HEK293T (cell line): ENCODE measurements at regions of chr10 and their contacts with region 1.

Region 1: DNA sequence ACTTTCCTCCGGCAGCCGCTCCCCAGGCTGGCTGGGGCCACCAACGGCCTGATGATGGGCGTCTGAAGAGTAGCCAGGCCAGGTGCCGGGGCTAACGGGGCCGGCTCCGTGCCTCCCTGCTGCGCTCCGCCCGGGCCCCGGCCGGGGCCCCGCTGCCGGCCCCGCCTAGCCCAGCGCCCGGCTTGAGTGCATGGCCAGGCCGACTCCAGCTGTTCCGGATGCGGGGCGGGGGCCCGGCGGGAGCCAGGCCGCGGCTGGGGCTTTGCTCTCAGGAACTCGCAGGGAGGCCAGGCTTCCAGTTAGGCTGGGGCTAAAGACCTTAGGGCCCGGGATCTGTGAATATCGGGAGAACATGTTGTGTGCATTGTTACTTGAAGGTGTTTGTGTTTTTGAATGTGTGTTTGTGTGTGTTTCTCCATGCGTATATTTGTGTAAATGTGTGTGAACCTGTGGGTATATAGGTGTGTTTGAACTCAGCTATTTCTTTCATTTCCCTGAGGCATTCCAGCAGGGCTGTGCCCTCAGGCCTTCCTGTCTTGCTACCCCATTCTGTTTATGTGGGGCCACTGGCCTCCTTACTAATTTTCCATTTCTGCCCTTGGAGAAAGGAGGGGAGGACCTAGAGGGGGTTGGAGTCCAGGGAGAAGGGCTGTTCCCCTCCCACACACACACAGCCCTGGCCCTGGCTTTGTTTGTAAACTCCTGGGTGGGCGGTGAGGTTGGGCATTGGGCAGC is 1.1 kb upstream of the LBX1 start:
- DNase-seq: peak; percentile 75

Region 2: GRCh38 chr10:101291331-101292193 is 61.2 kb after region 1 on chr10:
- CTCF ChIA-PET with region 1: no interaction called
- POLR2A ChIA-PET with region 1: interaction called, 17 read pairs
- DNase-seq: peak; percentile 91

Region 3: GRCh38 chr10:101353692-101354327 is 123.5 kb after region 1 on chr10 and contains the start of gene BTRC:
- CTCF ChIA-PET with region 1: no interaction called
- POLR2A ChIA-PET with region 1: no interaction called
- DNase-seq: peak; percentile 97

Region 4: DNA sequence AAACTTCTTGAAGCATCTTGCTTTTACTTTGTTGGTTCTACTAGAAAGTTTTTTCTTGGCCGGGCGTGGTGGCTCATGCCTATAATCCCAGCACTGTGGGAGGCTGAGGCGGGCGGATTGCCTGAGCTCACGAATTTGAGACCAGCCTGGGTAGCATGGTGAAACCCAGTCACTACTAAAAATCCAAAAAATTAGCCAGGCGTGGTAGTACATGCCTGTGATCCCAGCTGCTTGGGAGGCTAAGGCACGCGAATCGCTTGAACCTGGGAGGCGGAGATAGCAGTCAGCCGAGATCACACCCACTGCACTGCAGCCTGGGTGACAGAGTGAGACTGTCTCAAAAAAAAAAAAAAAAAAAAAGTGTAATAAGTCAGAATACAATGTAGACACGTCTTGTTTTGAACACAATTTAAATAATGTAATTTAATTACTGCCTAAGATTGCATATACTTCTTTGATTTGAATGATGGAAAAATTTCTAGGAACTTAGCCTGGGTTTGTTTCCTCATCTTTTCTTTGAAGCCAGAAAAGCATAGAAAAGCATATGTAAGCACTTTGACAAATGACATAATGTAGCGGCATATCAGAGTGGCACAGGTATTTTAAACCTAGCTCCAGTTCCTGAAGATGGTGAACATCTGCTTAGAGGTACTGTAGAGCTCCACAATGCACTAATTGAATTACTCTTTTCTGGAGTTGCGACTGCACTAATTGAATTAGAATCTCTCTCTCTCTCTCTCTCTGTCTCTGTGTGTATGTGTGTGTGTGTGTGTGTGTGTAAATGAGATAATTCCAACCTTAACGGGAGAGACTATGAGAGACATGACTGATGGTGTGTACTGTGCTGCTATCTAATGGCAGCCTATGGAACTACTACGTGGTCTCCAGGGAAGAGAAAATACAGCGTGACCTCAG is 211.4 kb after region 1 on chr10:
- CTCF ChIA-PET with region 1: no interaction called
- POLR2A ChIA-PET with region 1: no interaction called
- DNase-seq: peak; percentile 79